Activated CD8-positive, alpha-beta T cell treated with anti-CD3 and anti-CD28 coated beads, Interleukin-2, amount 10 ng/mL, durations not matched to agents 7 days and 5 days (primary cell): ENCODE measurements at regions of chr13 and their contacts with region 1.

Region 1: DNA sequence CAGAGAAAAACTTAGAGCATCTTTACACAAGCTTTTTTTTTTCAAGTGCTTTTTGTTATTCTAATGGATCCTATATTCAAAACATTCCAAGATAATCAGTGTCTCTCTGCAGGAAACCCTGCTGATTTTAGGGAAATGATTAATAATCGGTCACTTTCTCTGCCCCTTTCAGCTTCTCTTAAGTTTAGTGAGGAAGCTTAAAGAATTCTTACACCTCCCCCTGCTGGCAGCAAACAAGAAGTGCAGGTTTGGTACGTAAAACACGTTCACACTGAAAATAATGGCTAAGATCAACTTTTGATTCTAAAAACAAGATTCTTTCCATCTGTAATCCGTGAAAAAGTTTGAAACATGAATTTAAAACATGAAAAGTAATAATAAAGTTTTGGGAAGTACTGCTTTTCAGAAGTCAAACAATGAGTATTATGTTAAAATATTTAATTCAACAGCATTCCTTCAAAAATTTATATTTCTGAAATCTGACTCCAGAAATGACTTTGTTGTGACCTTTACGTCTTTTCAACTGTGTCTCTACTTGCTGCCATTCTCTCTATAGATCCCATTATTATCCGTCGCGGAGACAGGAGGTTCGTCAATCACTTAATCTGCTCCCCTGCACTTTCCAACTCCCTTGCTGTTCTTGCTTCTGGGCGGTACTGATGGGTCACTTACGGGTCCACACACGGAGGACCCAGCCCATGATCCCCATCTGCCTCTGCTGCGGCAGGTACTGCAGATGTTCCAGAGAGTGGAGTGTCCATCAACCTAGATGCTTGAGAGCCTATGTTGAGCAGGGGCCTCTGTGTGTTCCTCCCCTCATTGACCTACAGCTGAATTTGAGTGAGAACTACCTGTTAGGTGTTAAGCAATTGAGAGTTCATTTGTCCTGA is 203.1 kb upstream of the EDNRB start:
- DNase-seq: peak; percentile 54
- ATAC-seq: no peak
- H3K4me3 Mint-ChIP-seq: no peak overlapping the region
- H3K27ac Mint-ChIP-seq: no peak overlapping the region
- H3K4me1 Mint-ChIP-seq: peaks cover 2% of the 10 kb centered on the region
- H3K27me3 Mint-ChIP-seq: peaks cover 7% of the 10 kb centered on the region

Region 2: GRCh38 chr13:77774181-77774580 is 347.5 kb before region 1 on chr13:
- CTCF ChIA-PET with region 1: interaction called, 22 read pairs
- POLR2A ChIA-PET with region 1: no interaction called
- DNase-seq: no peak
- ATAC-seq: no peak
- H3K4me3 Mint-ChIP-seq: no peak overlapping the region
- H3K27ac Mint-ChIP-seq: no peak overlapping the region
- H3K4me1 Mint-ChIP-seq: no peaks in the 10 kb centered on the region
- H3K27me3 Mint-ChIP-seq: no peaks in the 10 kb centered on the region

Region 3: DNA sequence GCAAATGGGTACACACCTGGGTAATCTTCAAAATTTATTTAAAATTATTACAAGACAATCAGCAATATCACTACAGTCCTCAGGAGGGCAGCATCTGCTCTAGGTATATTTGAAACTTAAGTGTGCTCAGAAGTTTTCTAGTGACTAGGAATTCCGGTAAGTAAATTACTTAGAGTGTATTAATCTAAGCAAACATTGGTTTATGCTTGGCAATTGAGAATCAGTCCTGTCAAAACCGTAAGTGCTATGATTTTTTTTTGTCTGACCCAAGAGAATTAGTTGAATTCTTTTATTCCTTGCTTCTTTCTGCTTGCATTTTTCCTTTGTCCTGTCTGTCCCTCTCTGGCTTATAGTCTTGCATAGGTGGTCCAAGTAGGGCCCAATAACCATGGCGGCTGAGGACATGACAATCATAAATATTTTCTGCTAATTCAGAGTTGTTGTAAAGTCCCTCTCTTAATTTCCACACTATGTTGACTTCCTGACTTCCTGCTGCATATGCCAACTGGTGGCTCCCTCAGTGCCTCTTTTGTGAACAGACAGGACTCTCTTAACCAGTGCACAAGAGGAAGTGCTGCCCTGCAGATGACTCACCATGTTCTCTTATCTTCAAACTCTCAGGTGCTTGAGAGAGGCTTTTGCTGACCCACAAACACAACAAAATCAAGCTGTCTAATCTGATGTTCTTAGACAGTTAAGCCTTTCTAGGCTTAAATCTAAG is 342.0 kb before region 1 on chr13:
- CTCF ChIA-PET with region 1: interaction called, 22 read pairs
- POLR2A ChIA-PET with region 1: no interaction called
- DNase-seq: peak; percentile 58
- ATAC-seq: peak; percentile 74
- H3K4me3 Mint-ChIP-seq: no peak overlapping the region
- H3K27ac Mint-ChIP-seq: peak overlapping the region; percentile 0
- H3K4me1 Mint-ChIP-seq: peaks cover 10% of the 10 kb centered on the region
- H3K27me3 Mint-ChIP-seq: no peaks in the 10 kb centered on the region

Region 4: DNA sequence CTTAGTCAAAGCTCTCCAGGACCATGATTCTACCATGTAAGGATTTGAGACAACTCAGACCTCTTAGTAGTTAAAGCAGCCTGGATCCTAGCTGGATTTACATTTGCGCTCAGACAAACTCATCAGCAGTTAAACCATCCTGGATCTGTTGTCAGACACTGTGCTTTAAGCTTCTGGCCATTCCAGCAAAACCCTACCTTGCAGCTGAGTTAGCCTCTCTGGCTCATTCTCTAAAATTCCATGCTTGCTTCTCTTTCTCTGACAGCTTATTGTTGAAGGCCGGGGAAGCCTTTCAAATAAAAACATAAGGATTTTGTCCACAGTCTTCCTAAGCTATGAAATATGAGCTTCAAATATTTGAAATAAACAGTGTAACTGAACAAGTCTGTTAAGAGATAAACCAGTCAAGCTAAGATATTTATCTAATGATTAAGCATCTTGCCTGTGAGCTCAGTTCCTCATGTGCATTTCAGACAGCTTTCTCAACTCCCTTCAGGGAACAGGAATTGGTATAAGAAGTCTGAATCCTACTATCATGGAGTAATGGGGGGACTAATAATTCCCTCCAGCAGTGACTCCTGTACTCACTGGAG is 334.9 kb before region 1 on chr13:
- CTCF ChIA-PET with region 1: interaction called, 13 read pairs
- POLR2A ChIA-PET with region 1: no interaction called
- DNase-seq: no peak
- ATAC-seq: no peak
- H3K4me3 Mint-ChIP-seq: no peak overlapping the region
- H3K27ac Mint-ChIP-seq: no peak overlapping the region
- H3K4me1 Mint-ChIP-seq: no peaks in the 10 kb centered on the region
- H3K27me3 Mint-ChIP-seq: peaks cover 5% of the 10 kb centered on the region

Region 5: DNA sequence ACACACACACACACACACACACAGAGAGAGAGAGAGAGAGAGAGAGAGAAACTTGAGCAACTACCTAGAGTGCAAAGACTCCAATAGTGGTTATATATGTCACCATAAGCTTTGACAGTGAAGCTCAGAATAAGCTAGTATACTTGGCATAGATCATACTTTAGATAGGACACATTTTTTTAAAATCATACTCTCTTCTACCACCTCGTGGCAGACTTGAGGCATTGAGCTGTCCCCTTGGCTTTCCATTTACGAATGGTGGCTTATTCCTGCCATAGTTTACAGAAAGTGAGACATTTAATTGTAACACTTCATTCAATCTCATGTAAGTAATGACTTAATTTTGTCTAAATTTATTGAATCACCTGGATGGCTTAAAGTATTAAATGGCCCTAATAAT is 311.3 kb before region 1 on chr13:
- CTCF ChIA-PET with region 1: interaction called, 12 read pairs
- POLR2A ChIA-PET with region 1: no interaction called
- DNase-seq: no peak
- ATAC-seq: no peak
- H3K4me3 Mint-ChIP-seq: no peak overlapping the region
- H3K27ac Mint-ChIP-seq: no peak overlapping the region
- H3K4me1 Mint-ChIP-seq: no peaks in the 10 kb centered on the region
- H3K27me3 Mint-ChIP-seq: peaks cover 4% of the 10 kb centered on the region

Region 6: DNA sequence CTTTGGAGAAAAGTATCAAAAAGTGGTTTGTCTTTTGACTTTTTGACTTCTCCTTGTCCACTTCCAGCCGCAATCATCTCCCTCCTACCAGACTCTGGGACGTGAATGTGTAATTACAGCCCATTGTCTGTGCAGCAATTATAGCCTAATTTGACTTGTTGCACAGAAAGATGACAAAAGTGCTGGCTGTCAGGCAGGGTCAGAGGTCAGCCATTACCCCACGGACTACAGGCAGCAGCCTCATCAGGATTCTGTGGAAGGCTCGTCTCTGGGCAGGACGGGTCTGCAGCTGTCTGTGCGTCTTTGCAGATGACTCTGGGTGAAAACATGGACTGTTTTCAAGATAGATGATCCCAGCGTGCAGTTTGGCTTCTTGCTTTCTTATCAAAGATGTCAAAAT is 100.8 kb before region 1 on chr13:
- CTCF ChIA-PET with region 1: no interaction called
- POLR2A ChIA-PET with region 1: no interaction called
- DNase-seq: no peak
- ATAC-seq: no peak
- H3K4me3 Mint-ChIP-seq: no peak overlapping the region
- H3K27ac Mint-ChIP-seq: no peak overlapping the region
- H3K4me1 Mint-ChIP-seq: peaks cover 16% of the 10 kb centered on the region
- H3K27me3 Mint-ChIP-seq: peaks cover 9% of the 10 kb centered on the region

Region 7: DNA sequence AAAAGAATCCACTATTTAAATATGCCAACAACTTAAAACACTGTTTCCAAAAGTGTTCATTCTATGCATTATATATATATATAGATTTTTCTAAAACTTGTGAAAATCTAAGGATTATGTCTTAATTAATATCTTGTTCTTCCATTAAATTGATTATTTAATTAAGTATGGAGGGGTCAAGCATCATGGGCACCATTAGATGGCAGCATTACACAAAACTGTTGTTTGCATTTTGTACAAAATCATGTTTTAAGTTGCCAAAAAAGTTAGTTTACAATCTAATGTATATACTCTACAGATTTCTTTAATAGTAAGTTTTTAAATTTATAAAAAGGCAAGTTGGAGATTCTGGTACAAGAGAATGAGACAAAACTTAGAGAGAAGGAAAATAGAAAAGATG is 10.1 kb after region 1 on chr13:
- CTCF ChIA-PET with region 1: interaction called, 12 read pairs
- POLR2A ChIA-PET with region 1: no interaction called
- DNase-seq: no peak
- ATAC-seq: no peak
- H3K4me3 Mint-ChIP-seq: no peak overlapping the region
- H3K27ac Mint-ChIP-seq: no peak overlapping the region
- H3K4me1 Mint-ChIP-seq: no peaks in the 10 kb centered on the region
- H3K27me3 Mint-ChIP-seq: peaks cover 5% of the 10 kb centered on the region